ENCODE measurements at regions of chr3 and their contacts with region 1.

Region 1: DNA sequence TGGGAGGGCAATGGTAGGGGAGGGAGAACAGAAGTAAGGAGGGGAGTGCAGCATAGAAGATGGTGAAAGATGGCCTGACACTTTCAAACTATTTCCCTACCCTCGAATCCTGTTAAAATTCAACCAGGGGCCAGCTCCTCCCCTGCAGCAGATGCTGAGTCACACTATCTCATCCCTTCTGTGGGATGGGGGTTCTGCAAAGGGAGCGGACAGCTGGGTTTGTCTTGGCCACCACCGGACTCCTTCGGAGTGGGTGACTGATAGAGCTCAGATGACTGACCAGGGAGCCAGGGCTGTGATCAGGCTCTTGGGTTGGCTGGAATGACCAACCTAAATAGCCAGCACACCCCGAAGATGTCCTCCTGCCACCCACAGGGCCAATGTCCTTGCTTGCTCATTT is 33.6 kb upstream of the TMCC1 start:
- DNase-seq: no peak
- H3K4me3 ChIP-seq: no peak overlapping the region
- H3K27ac ChIP-seq: no peak overlapping the region
- H3K4me1 ChIP-seq: no peaks in the 10 kb centered on the region
- H3K27me3 ChIP-seq: peaks cover 0 to 13% (median 0%) of the 10 kb centered on the region in 4 donors
- CTCF ChIP-seq: no peak
- POLR2A ChIP-seq: no peak

Region 2: GRCh38 chr3:129650256-129650872 is 276.7 kb before region 1 on chr3:
- intact Hi-C with region 1: loop called (anchors 5 kb)
- DNase-seq: no peak
- H3K4me3 ChIP-seq: no peak overlapping the region
- H3K27ac ChIP-seq: no peak overlapping the region
- H3K4me1 ChIP-seq: peaks cover 0 to 28% (median 6%) of the 10 kb centered on the region in 3 donors
- H3K27me3 ChIP-seq: no peaks in the 10 kb centered on the region
- CTCF ChIP-seq: peak; percentile 45 to 87 (median 78)
- POLR2A ChIP-seq: no peak